Activated T-helper 1 cell treated with anti-CD3 and anti-CD28 coated beads, Interleukin-12 subunit alpha, Interleukin-12 subunit beta, Interleukin-2, Interleukin-4 antibody, amounts not matched to agents 30 ng/mL and 10 ng/mL and 1 ng/mL, durations not matched to agents 14 hours and 24 hours and 36 hours (primary cell): ENCODE measurements at regions of chr3 and their contacts with region 1.

Region 1: GRCh38 chr3:129893581-129894070 is at the start of gene TMCC1:
- DNase-seq: peak; percentile 83
- H3K4me3 Mint-ChIP-seq: peak within 1 kb of the TSS; percentile 91
- H3K27ac Mint-ChIP-seq: peak within 1 kb of the TSS; percentile 89
- H3K4me1 Mint-ChIP-seq: peaks cover 47% of the 10 kb centered on the region
- H3K27me3 Mint-ChIP-seq: no peaks in the 10 kb centered on the region
- total RNA-seq, gene TMCC1: 17.1 and 22.4 TPM in 2 replicates

Region 2: DNA sequence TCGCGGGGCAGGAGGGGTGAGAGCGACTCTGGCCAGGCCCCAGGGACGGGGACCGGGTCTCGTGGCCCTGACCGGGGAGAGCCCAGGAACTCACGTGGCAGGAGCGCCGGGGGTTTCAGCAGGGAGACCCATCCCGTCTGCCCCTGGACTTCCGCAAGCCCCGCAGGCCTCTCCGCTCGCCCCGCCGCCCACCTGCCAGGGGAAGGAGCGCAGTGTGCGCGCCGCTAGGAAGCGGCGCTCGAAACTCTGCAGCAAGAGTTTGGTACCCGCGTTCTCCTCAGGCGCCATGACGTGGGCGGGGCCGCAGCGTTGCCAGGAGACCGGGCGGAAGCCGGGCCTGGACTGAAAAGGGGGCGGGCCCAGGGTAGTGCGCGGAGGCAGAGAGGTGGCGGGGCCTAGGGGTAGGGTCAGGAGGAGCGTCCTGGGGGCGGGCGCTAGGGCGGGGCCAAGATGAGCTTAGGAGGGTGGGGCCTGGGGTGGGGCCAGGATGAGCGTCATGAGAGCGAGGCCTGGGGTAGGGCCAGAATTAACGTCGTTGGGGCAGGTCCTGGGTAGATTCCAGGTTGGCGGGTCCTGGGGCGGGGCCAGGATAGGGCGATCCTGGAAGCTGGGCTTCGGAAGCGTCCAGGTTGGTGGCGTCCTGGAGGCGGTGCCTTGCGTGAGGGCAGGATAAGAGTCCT is 217.7 kb after region 1 on chr3:
- intact Hi-C with region 1: loop called (anchors 1 kb)
- DNase-seq: peak; percentile 98
- H3K4me3 Mint-ChIP-seq: peak overlapping the region; percentile 96
- H3K27ac Mint-ChIP-seq: peak overlapping the region; percentile 97
- H3K4me1 Mint-ChIP-seq: peaks cover 20% of the 10 kb centered on the region
- H3K27me3 Mint-ChIP-seq: peaks cover 6% of the 10 kb centered on the region

Region 3: GRCh38 chr3:130548356-130548755 is 654.7 kb after region 1 on chr3:
- intact Hi-C with region 1: no loop called
- DNase-seq: no peak
- H3K4me3 Mint-ChIP-seq: no peak overlapping the region
- H3K27ac Mint-ChIP-seq: no peak overlapping the region
- H3K4me1 Mint-ChIP-seq: no peaks in the 10 kb centered on the region
- H3K27me3 Mint-ChIP-seq: no peaks in the 10 kb centered on the region